ENCODE measurements at regions of chr1 and their contacts with region 1.

Region 1: GRCh38 chr1:45026446-45026845 is 14.4 kb downstream of the UROD start:
- DNase-seq: no peak
- H3K4me3 ChIP-seq: no peak overlapping the region
- H3K27ac ChIP-seq: no peak overlapping the region
- H3K4me1 ChIP-seq: no peaks in the 10 kb centered on the region
- H3K27me3 ChIP-seq: no peaks in the 10 kb centered on the region
- CTCF ChIP-seq: no peak

Region 2: DNA sequence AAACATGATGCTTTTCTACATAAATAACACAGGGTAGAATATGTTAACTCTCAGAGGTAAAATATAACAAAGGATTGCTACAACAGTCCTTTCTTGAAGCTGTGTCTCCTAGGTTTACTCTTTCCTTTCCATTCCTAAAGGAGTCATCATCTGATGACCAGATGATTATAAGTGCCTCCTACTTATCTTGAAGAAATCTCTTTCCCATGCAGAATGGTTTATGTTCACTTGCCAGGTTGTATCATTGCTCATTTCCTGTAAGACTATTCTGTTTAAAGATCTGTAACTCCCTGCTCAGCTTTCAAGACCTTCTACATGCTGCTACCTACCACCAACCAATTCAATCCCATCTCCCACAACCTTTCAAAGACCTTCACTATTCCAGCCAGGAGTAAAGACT is 131.9 kb before region 1 on chr1:
- CTCF ChIA-PET with region 1: no interaction called
- POLR2A ChIA-PET with region 1: no interaction called
- intact Hi-C with region 1: no loop called
- DNase-seq: no peak
- H3K4me3 ChIP-seq: no peak overlapping the region
- H3K27ac ChIP-seq: no peak overlapping the region
- H3K4me1 ChIP-seq: no peaks in the 10 kb centered on the region
- H3K27me3 ChIP-seq: no peaks in the 10 kb centered on the region
- CTCF ChIP-seq: no peak

Region 3: GRCh38 chr1:44985747-44986359 is 40.6 kb before region 1 on chr1:
- CTCF ChIA-PET with region 1: no interaction called
- POLR2A ChIA-PET with region 1: interaction called, 11 read pairs
- intact Hi-C with region 1: no loop called
- DNase-seq: no peak
- H3K4me3 ChIP-seq: peak overlapping the region; percentile 71
- H3K27ac ChIP-seq: no peak overlapping the region
- H3K4me1 ChIP-seq: peaks cover 7% of the 10 kb centered on the region
- H3K27me3 ChIP-seq: no peaks in the 10 kb centered on the region
- CTCF ChIP-seq: no peak

Region 4: DNA sequence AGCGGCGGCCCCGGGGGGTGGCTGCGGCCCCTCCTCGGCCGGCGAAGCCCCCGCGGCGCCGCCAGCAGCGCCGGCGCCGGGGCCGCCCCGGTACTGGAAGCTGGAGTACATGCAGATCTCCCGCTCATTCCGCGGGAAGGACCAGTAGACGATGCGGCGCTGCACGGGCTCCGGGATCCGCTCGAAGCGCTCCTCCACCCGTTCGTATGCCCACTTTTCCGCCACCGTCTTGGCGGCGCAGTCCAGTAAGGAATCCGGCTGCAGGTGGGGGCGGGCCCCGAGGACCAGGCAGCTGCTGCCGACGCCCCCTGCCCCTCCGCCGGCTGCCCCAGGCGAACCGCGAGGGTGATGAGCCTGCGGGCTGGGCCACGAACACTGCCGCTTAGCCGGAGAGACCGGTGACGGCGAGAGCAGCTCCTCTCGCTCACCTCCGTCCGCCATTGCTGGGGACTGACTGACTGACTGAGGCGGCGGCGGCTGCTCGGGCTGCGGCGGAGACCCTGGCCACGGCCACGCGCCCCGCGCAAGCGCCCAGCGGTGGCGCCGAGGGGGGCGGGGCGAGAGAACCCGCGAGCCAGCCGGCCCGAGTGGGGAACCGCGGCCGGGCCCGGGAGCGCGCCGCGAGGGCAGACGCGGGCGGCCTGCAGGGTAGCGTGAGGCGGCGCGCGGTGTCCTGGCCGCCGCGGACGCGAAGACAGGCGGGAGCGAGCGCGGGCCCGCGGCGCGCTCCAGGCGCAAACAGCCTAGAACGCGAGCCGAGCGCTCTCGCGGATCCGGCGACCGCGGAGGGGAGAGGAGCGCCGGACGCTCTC is 179.7 kb after region 1 on chr1 and contains the start of gene ZSWIM5:
- CTCF ChIA-PET with region 1: no interaction called
- POLR2A ChIA-PET with region 1: no interaction called
- intact Hi-C with region 1: no loop called
- DNase-seq: peak; percentile 40 to 65
- H3K4me3 ChIP-seq: peak within 1 kb of the TSS; percentile 95
- H3K27ac ChIP-seq: no peak within 1 kb of the TSS
- H3K4me1 ChIP-seq: peaks cover 13% of the 10 kb centered on the region
- H3K27me3 ChIP-seq: peaks cover 6% of the 10 kb centered on the region; the same call in 1 of the 2 replicates
- CTCF ChIP-seq: no peak
- total RNA-seq, gene ZSWIM5: 0.50 and 0.55 TPM in 2 replicates